CD4-positive, alpha-beta T cell (primary cell): ENCODE measurements at regions of chr5 and their contacts with region 1.

Region 1: GRCh38 chr5:75457685-75458084 is 53.7 kb downstream of the CERT1 start:
- DNase-seq: no peak
- ATAC-seq: no peak
- H3K4me3 ChIP-seq: no peak overlapping the region
- H3K4me3 Mint-ChIP-seq: no peak overlapping the region
- H3K27ac ChIP-seq: no peak overlapping the region
- H3K27ac Mint-ChIP-seq: no peak overlapping the region
- H3K4me1 ChIP-seq: no peaks in the 10 kb centered on the region
- H3K4me1 Mint-ChIP-seq: peaks cover 25% of the 10 kb centered on the region
- H3K27me3 ChIP-seq: no peaks in the 10 kb centered on the region
- H3K27me3 Mint-ChIP-seq: no peaks in the 10 kb centered on the region
- CTCF ChIP-seq: no peak

Region 2: DNA sequence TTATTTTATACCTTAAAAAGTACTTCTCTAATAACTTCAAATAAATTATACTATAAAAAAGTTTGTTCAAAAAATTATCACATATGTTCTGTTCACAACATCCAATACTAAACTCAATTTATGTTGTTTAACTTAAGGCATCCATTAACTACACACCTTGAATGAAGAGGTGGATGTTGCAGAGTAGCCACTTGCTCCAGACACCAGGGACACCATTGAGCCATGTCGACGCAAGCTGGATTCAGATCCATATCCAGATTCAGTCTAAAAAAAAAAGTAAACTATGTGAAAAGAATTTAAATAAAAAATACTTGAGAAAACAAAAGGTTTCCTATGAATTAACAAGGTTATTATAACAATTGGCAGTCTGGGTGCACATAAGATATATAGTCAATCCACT is 31.5 kb before region 1 on chr5:
- CTCF ChIA-PET with region 1: no interaction called
- POLR2A ChIA-PET with region 1: no interaction called
- intact Hi-C with region 1: loop called in 1 of 2 experiments (anchors 1 kb)
- DNase-seq: no peak
- ATAC-seq: no peak
- H3K4me3 ChIP-seq: no peak overlapping the region
- H3K4me3 Mint-ChIP-seq: no peak overlapping the region
- H3K27ac ChIP-seq: no peak overlapping the region
- H3K27ac Mint-ChIP-seq: no peak overlapping the region
- H3K4me1 ChIP-seq: no peaks in the 10 kb centered on the region
- H3K4me1 Mint-ChIP-seq: no peaks in the 10 kb centered on the region
- H3K27me3 ChIP-seq: no peaks in the 10 kb centered on the region
- H3K27me3 Mint-ChIP-seq: no peaks in the 10 kb centered on the region
- CTCF ChIP-seq: no peak